ENCODE measurements at regions of chr3 and their contacts with region 1.

Region 1: DNA sequence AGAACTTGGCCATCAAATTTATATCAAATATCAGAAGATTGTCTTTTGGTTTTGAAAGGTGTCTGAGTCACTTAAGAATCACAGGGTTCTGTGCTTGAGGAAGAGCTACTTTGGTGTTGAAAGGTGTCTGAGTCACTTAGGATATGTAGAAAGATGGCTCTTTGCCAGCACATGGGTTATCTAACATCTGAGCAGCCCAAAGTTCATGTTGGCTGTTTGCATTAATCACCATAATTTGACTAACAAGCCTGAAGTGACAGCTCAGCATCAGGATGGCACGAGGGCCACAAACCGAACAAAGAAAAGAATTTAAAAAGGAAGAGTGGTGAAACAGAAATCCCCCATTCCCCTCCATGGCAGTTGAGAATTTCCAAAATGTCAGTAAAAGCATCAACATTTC is 190.5 kb upstream of the CMC1 start:
- DNase-seq: peak; percentile 68
- H3K4me3 Mint-ChIP-seq: no peak overlapping the region
- H3K27ac Mint-ChIP-seq: no peak overlapping the region
- H3K4me1 Mint-ChIP-seq: peaks cover 19% of the 10 kb centered on the region
- H3K27me3 Mint-ChIP-seq: peaks cover 6% of the 10 kb centered on the region

Region 2: DNA sequence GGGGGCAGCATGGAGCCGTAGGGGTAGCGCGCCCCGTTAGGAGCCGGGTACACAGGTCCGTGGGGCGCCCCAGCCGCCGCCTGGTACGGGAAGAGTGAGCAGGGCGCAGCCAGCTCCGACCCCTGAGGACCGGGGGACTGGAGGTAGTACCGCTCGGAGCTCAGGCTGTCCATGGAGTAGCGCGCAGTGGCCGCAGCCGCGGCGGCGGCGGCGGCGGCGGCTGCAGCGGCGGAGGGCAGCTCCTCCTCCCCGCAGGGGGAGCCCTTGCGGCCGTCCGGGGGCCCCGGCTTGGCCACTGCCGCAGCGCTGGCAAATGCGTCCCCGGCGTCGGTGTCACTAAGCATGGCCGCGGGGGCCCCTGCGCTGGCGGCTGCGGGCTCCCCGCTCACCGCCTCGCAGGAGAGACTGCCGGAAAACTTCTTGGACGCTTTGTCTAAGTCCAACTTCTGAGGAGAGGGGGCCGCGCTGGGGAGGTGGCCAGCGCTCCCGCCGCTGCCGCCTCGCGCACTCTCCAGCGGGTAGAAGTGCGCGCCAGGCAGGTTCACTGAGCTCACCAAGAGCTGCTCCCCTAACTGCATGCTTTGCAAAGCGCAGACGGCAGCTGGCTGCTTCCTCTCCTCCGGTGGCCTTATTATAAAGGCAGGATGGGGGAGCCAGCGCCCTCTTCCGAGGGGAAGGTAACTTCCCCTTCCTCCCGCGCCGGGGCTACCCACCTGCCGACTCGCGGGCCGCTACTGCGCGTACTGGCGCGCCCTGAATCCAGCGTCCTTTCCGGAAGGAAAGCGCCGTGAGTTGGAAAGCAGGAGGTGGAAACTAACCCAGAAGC is 329.0 kb before region 1 on chr3 and contains the start of gene EOMES:
- CTCF ChIA-PET with region 1: no interaction called
- intact Hi-C with region 1: loop called (anchors 2 kb)
- DNase-seq: peak; percentile 79
- H3K4me3 Mint-ChIP-seq: peak within 1 kb of the TSS; percentile 75
- H3K27ac Mint-ChIP-seq: no peak within 1 kb of the TSS
- H3K4me1 Mint-ChIP-seq: peaks cover 21% of the 10 kb centered on the region
- H3K27me3 Mint-ChIP-seq: peaks cover 68% of the 10 kb centered on the region
- total RNA-seq, gene EOMES: 0.12 to 0.14 TPM

Region 3: GRCh38 chr3:27758083-27758482 is 292.8 kb before region 1 on chr3:
- CTCF ChIA-PET with region 1: no interaction called
- intact Hi-C with region 1: no loop called
- DNase-seq: peak; percentile 35
- H3K4me3 Mint-ChIP-seq: no peak overlapping the region
- H3K27ac Mint-ChIP-seq: no peak overlapping the region
- H3K4me1 Mint-ChIP-seq: peaks cover under 1% of the 10 kb centered on the region
- H3K27me3 Mint-ChIP-seq: no peaks in the 10 kb centered on the region

Region 4: GRCh38 chr3:27900316-27900715 is 150.6 kb before region 1 on chr3:
- CTCF ChIA-PET with region 1: no interaction called
- intact Hi-C with region 1: loop called (anchors 2 kb)
- DNase-seq: peak; percentile 34
- H3K4me3 Mint-ChIP-seq: no peak overlapping the region
- H3K27ac Mint-ChIP-seq: no peak overlapping the region
- H3K4me1 Mint-ChIP-seq: peaks cover 38% of the 10 kb centered on the region
- H3K27me3 Mint-ChIP-seq: no peaks in the 10 kb centered on the region

Region 5: DNA sequence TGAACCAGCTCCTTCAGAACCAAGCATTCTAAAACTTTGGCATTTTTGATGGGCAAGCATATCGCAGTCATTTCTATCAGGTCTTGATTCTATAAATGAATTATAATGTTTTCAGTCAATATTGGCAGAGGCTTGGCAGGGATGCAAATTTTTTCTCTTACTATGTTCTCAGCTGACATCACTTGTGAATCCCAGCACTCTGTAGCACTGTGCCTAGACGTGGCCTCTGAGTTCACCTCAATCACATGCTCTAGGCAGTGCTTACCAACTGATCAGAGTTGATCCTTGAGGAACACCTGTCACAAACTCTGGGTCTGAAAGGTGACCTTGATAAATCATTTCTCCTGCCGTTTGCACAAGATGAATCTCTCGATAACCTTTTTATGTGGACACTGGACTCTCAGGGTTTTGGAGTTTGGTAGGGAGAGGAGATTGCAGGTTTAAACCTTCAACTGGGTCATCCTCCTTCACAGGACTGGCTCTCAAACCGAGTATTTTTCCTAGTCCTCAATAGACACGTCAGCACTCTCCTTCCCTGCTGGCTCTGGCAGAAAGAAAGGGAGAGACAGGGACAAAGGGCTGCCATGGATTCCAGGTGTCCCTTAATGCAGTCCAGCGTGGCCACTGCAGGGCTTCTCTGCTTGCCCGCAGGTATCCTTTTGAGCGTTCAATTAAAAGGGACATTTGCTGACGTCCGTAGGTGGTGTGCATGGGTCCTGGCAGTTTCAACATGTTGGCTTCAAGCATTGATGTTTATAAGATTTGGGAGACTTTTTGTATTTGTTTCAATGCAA is 31.8 kb before region 1 on chr3:
- CTCF ChIA-PET with region 1: no interaction called
- intact Hi-C with region 1: loop called (anchors 1 kb)
- DNase-seq: no peak
- H3K4me3 Mint-ChIP-seq: no peak overlapping the region
- H3K27ac Mint-ChIP-seq: no peak overlapping the region
- H3K4me1 Mint-ChIP-seq: peaks cover 4% of the 10 kb centered on the region
- H3K27me3 Mint-ChIP-seq: no peaks in the 10 kb centered on the region

Region 6: DNA sequence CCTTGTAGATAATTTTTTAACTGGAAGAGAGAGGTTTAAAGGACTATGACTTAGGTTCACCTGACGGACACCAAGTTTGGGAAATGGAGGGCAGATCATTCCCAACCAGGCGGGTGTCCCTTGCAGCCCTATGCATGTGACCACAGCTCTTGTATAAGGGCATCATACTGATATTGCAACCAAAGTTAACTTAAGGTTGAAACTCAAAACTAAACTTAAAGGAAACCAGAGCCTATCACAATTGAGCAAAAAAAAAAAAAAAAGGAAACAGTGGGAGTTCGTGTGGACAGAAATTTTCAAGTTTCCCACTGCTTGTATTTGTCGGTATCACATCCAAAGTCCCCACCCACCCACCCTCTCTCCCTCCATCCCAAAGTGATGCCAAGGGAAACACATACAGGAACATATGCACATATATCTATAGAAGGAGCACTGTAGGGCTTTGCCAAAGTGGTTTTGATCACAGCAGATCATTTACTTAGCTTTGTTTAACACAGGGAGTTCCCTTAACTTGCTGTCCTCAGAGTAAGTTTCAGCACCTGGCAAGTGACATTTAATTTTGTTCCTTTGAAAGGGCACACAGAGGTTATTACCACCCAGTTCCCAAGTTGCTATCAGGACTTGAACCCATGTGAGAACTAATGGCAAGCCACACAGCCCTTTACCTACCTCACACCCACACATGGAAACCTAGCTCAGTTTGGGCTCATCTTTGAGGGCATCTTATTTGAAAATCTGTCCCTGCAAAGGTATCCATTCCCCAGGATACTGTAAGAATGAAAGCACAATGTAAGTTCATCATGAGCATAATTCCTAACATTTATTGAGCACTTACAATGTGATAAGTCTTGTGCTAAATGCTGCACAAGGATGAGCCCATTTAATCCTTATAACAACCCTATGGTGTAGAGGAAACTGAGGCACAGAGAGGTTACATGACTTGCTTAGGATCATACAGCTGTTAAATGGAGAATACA is 14.0 kb before region 1 on chr3:
- CTCF ChIA-PET with region 1: no interaction called
- intact Hi-C with region 1: no loop called
- DNase-seq: no peak
- H3K4me3 Mint-ChIP-seq: no peak overlapping the region
- H3K27ac Mint-ChIP-seq: no peak overlapping the region
- H3K4me1 Mint-ChIP-seq: no peaks in the 10 kb centered on the region
- H3K27me3 Mint-ChIP-seq: no peaks in the 10 kb centered on the region

Region 7: GRCh38 chr3:28139967-28140634 is 89.2 kb after region 1 on chr3:
- CTCF ChIA-PET with region 1: no interaction called
- intact Hi-C with region 1: no loop called
- DNase-seq: no peak
- H3K4me3 Mint-ChIP-seq: no peak overlapping the region
- H3K27ac Mint-ChIP-seq: no peak overlapping the region
- H3K4me1 Mint-ChIP-seq: no peaks in the 10 kb centered on the region
- H3K27me3 Mint-ChIP-seq: no peaks in the 10 kb centered on the region

Region 8: DNA sequence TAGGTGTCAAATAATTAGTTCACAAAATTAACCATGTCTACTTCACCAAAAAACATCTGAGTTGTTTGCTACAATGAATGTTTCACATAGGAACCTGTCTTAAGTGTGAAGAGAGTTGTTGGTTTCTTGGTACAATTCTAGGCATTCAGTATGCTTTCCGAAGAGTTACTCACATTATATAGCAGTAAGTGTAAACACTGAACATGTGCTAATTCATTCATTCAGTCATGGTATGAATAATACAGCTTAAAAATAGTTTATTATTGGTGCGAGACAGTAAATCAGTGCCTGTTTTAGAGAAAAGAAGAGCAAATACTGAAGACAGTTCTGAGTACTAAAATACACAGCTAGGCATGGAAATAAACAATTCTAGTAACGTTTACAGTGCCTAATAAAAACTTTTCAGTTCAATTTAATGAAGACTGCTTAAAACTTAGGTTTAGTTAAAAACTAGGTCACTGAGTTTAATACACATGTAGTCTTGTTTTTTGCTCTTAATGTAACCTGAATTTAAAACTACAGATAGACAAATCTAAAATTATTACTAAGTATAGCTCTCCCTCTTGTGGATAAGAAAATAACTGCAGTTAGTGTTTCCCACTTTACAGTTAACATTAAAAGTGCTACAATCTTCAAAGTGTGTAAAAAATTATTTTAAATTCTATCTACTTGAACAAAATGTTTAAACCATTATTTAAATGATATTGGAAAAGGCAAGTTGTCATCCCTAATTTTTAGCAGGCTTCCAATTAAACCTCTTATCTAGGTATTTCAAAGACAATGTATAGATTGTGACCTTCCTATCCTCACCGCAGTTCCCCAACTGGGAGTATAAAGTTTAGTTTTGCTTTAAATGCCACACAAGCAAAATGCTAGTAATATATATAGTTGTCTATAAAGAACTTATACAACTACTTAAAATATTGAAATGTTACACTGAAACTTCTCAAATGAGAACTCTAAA is 277.6 kb after region 1 on chr3:
- CTCF ChIA-PET with region 1: no interaction called
- intact Hi-C with region 1: loop called (anchors 1 kb)
- DNase-seq: no peak
- H3K4me3 Mint-ChIP-seq: no peak overlapping the region
- H3K27ac Mint-ChIP-seq: no peak overlapping the region
- H3K4me1 Mint-ChIP-seq: peaks cover 9% of the 10 kb centered on the region
- H3K27me3 Mint-ChIP-seq: no peaks in the 10 kb centered on the region

Region 9: GRCh38 chr3:29186982-29187725 is 1136.3 kb after region 1 on chr3:
- CTCF ChIA-PET with region 1: no interaction called
- intact Hi-C with region 1: loop called (anchors 10 kb)
- DNase-seq: no peak
- H3K4me3 Mint-ChIP-seq: no peak overlapping the region
- H3K27ac Mint-ChIP-seq: peak overlapping the region; percentile 38
- H3K4me1 Mint-ChIP-seq: peaks cover 12% of the 10 kb centered on the region
- H3K27me3 Mint-ChIP-seq: no peaks in the 10 kb centered on the region

Measured in activated naive CD4-positive, alpha-beta T cell treated with anti-CD3 and anti-CD28 coated beads for 36 hours (primary cell).